ENCODE measurements at regions of chr20 and their contacts with region 1.

Region 1: GRCh38 chr20:44727039-44727438 is 11.9 kb downstream of the CCN5 start:
- DNase-seq: no peak
- H3K4me3 ChIP-seq: no peak overlapping the region
- H3K27ac ChIP-seq: peak overlapping the region in 7 of 59 donors; percentile 2 to 66 (median 33)
- H3K27me3 ChIP-seq: no peaks in the 10 kb centered on the region
- CTCF ChIP-seq: no peak

Region 2: DNA sequence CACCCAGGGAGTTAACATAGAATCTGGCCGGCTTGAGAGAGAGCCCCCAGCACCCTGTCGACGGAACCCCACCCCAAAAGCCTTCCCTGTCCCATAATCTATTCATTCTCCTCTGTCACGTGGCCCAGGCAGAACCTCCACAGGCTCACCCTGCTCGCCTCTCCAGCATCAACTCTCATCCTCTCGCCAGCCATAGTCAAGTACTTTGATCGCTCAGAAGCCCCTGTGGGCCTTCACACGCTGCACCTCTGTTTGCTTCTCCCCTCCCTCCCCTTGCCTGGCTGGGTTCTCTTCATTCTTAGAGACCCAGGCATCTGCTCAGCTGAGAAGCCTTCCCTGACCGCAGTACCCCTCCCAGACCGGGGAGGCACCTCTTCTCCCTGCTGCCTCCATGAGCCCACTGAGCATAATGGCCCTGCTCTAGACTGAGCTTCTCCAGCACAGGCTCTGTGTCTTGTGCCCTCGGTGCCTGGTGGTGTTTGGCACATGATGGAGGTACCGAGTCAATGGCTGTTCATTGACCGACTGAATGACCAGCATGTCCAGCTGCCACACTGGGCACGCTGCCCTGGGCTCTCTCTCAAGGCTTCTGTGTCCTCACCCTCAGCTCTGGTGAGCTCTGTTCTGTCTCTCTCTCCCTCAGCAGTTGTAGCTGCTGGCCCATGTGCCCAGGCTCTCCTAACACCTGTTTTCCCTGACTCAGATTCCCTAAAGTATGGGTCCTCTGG is 111.0 kb before region 1 on chr20:
- intact Hi-C with region 1: loop called in 1 of 2 experiments (anchors 2 kb)
- DNase-seq: peak; percentile 42 to 99 (median 94)
- H3K4me3 ChIP-seq: peak overlapping the region in 2 of 59 donors; percentile 1 to 8
- H3K27ac ChIP-seq: peak overlapping the region; percentile 85 to 100 (median 97)
- H3K27me3 ChIP-seq: no peaks in the 10 kb centered on the region
- CTCF ChIP-seq: peak in 6 of 56 donors; percentile 7 to 18 (median 12)